Endothelial cell of umbilical vein (primary cell): ENCODE measurements at regions of chr22 and their contacts with region 1.

Region 1: DNA sequence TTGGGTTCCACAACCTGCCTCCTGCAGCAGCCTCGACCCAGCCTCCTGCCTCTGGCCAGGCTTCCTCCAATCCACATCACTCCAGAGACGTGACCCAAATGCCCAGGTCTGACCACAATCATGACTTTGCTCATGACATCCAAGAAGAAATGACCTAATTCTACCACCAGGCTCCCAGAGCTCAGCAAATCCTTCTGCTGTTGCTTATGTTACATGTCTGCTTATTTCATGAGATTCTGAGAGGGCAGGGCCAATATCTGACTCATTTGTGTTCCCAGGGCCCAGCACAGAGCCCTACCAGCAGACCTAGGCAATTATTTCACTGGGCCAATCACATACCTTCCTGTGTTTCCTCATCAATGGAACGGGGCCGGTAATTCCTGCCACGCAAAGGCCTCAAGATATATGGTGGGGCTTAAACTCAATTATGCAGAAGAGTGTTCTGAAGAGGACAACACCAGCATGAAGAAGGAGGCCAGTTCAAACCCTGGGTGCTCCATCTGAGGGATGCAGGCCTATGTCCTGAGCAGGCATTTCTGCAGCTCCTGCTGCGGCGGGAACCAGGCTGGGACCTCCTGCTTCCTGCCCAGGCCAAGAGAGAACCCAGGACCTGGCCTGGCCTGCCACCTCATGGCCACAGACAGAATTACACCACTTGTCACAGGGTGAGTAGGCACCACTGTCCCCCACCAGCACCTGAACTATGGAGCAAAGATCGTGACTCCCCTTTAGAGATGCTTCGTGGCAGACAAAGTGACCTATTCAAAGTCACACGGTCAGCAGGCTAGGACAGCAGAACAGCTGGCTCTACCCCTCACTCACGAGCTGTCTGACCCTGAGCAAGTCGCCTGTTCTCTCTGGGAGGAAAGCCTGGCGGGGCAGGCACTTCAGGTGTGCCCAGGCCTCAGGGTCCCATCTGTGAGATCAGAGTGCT is 5.9 kb downstream of the CENPM start:
- DNase-seq: peak; percentile 75
- H3K4me3 ChIP-seq: no peak overlapping the region
- H3K27ac ChIP-seq: no peak overlapping the region
- H3K4me1 ChIP-seq: peaks cover 29% of the 10 kb centered on the region
- H3K27me3 ChIP-seq: no peaks in the 10 kb centered on the region
- CTCF ChIP-seq: peak; percentile 83 to 89
- POLR2A ChIP-seq: no peak

Region 2: GRCh38 chr22:41666661-41667258 is 274.3 kb before region 1 on chr22:
- CTCF ChIA-PET with region 1: interaction called, 29 read pairs
- POLR2A ChIA-PET with region 1: no interaction called
- dilution Hi-C with region 1: no loop called
- intact Hi-C with region 1: loop called (anchors 1 kb)
- DNase-seq: peak; percentile 94
- H3K4me3 ChIP-seq: peak overlapping the region in 2 of 3 experiments; percentile 32 to 51
- H3K27ac ChIP-seq: peak overlapping the region; percentile 87
- H3K4me1 ChIP-seq: peaks cover 15% of the 10 kb centered on the region
- H3K27me3 ChIP-seq: no peaks in the 10 kb centered on the region
- CTCF ChIP-seq: peak; percentile 100
- POLR2A ChIP-seq: peak; percentile 90

Region 3: DNA sequence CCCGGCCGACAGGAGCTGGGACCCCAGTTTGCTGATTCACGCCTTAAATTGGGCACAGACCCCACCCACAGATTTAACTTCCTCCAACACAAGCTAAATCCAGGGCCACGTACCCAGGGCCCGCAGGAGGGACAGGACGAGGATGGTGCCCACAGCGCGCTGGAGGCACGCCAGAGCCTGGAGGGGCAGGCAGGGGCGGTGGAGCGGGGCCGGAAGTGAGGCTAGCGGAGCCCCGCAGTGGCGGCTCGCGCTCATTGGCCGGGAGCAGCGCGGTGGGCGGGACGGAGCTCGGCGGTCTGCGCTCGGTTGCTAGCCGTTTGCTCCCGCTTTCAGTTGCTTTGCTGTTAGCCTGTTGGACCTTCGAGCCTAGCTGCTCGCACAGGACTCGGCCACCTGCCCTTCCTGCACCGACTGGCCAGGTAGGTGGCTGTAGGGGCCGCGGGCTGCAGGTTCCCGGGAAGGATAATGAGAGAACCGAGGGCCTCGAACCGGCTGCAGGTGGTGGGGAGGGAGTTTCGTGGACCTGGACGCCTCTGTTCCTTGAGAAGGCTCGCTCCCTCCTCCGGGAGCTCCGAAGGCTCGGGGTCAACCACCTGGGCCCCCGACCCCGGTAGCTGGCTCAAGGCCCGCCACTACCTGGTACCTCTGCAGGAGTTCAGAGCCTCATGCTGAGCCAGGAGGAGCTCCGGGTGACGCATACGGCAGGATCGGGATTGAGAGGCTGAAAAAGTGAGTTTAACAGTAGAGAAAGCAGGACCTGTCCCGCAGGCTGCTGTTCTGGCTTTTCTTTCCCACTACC is 140.6 kb before region 1 on chr22 and contains the start of gene CCDC134:
- CTCF ChIA-PET with region 1: interaction called, 19 read pairs
- POLR2A ChIA-PET with region 1: no interaction called
- dilution Hi-C with region 1: no loop called
- intact Hi-C with region 1: no loop called
- DNase-seq: peak; percentile 84
- H3K4me3 ChIP-seq: peak within 1 kb of the TSS; percentile 62 to 83 (median 78)
- H3K27ac ChIP-seq: peak within 1 kb of the TSS; percentile 21
- H3K4me1 ChIP-seq: peaks cover 16% of the 10 kb centered on the region
- H3K27me3 ChIP-seq: no peaks in the 10 kb centered on the region
- CTCF ChIP-seq: no peak
- POLR2A ChIP-seq: peak; percentile 93
- total RNA-seq, gene CCDC134: 8.1 and 8.4 TPM in 2 replicates

Region 4: DNA sequence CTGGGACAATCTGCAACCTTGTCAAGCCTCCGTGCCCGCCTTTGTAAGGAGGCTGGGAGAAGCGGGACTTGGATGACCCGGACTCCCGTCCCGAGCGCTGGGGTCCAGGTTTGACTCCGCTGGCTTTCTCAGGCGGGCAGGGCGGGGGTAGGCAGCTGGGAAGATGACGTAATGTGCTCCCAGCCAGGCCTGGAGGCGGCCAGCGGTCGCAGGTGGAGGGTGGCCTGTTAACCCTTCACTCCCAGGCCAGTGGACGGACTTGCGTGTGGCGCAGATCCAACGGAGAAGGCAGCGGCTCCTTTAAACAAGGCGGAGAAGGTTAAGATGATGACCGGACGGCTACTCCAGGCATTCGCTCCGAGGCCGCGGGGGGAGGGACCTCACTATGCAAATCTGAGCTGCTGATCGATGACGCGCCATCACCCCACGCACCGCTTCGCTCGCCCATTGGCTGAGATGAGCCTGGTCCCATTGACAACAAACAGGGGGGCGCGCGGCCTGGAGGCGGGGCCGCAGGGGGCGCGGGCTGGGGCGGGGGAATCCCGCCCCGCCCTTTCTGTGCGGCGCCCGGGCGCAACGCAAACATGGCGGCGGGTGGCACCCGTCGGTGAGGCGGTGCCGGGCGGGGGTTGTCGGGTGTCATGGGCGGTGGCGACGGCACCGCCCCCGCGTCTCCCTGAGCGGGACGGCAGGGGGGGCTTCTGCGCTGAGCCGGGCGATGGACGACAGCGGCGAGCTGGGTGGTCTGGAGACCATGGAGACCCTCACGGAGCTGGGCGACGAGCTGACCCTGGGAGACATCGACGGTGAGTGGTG is 108.3 kb before region 1 on chr22 and contains the start of gene SREBF2:
- CTCF ChIA-PET with region 1: interaction called, 14 read pairs
- POLR2A ChIA-PET with region 1: interaction called, 4 read pairs
- dilution Hi-C with region 1: no loop called
- intact Hi-C with region 1: loop called (anchors 2 kb)
- DNase-seq: peak; percentile 100
- H3K4me3 ChIP-seq: peak within 1 kb of the TSS; percentile 59 to 81 (median 75)
- H3K27ac ChIP-seq: peak within 1 kb of the TSS; percentile 73
- H3K4me1 ChIP-seq: peaks cover 16% of the 10 kb centered on the region
- H3K27me3 ChIP-seq: no peaks in the 10 kb centered on the region
- CTCF ChIP-seq: no peak
- POLR2A ChIP-seq: peak; percentile 68
- total RNA-seq, gene SREBF2: 136 and 144 TPM in 2 replicates

Region 5: GRCh38 chr22:41925655-41926460 is 15.2 kb before region 1 on chr22:
- CTCF ChIA-PET with region 1: interaction called, 62 read pairs
- POLR2A ChIA-PET with region 1: no interaction called
- dilution Hi-C with region 1: no loop called
- intact Hi-C with region 1: loop called (anchors 2 kb)
- DNase-seq: peak; percentile 49
- H3K4me3 ChIP-seq: peak overlapping the region in 1 of 3 experiments; percentile 19
- H3K27ac ChIP-seq: no peak overlapping the region
- H3K4me1 ChIP-seq: peaks cover 4% of the 10 kb centered on the region
- H3K27me3 ChIP-seq: peaks cover 9 to 14% of the 10 kb centered on the region in 2 experiments
- CTCF ChIP-seq: peak; percentile 74 to 78
- POLR2A ChIP-seq: no peak

Region 6: GRCh38 chr22:41976401-41976901 is 35.4 kb after region 1 on chr22:
- CTCF ChIA-PET with region 1: no interaction called
- POLR2A ChIA-PET with region 1: no interaction called
- dilution Hi-C with region 1: no loop called
- intact Hi-C with region 1: no loop called
- DNase-seq: no peak
- H3K4me3 ChIP-seq: peak overlapping the region in 2 of 3 experiments; percentile 2 to 32
- H3K27ac ChIP-seq: no peak overlapping the region
- H3K4me1 ChIP-seq: peaks cover 3% of the 10 kb centered on the region
- H3K27me3 ChIP-seq: peaks cover 24 to 31% of the 10 kb centered on the region in 2 experiments
- CTCF ChIP-seq: no peak
- POLR2A ChIP-seq: no peak